CD4-positive, alpha-beta memory T cell (primary cell): ENCODE measurements at regions of chr21 and their contacts with region 1.

Region 1: DNA sequence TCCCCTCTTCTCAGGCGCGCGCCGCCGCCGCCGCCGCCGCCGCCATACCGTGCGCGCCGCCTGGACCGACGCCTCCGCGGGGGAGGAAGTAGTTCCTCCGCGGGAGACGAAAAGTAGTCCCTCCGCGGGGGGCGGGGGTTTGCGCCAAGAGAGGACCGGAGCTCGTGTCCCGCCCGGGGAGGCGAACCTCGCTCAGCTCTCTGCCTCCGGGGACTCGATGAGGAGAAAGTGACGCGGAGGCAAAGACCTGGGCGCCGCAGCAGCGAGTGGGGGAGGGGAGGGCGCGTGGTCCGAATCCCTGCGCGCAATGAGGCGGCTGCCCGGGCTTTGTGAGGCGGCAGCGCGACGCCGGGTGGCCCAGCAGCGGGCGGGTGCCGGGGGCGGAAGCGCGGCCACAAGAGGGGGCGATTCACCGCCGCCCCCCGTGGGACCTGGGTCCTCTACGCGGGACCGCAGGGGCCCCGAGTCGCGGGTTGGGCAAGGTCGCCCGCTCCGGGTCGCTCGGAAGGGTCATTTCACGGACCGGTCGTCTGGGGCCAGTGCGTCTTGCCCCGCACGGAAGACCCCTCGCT is at the start of gene BRWD1:
- DNase-seq: peak; percentile 80 to 87 (median 86)
- H3K4me3 ChIP-seq: peak within 1 kb of the TSS; percentile 33 to 85
- H3K4me3 Mint-ChIP-seq: peak within 1 kb of the TSS; percentile 85 to 95 (median 92)
- H3K27ac ChIP-seq: peak within 1 kb of the TSS; percentile 74
- H3K27ac Mint-ChIP-seq: peak within 1 kb of the TSS; percentile 92 to 99 (median 95)
- H3K4me1 ChIP-seq: peaks cover 35% of the 10 kb centered on the region
- H3K4me1 Mint-ChIP-seq: peaks cover 33 to 53% (median 40%) of the 10 kb centered on the region in 4 donors
- H3K27me3 ChIP-seq: no peaks in the 10 kb centered on the region
- H3K27me3 Mint-ChIP-seq: peaks cover 0 to 2% of the 10 kb centered on the region in 2 donors
- total RNA-seq, gene BRWD1: 92.9 to 99.0 TPM

Region 2: GRCh38 chr21:38824124-38824822 is 489.4 kb before region 1 on chr21:
- CTCF ChIA-PET with region 1: no interaction called
- POLR2A ChIA-PET with region 1: no interaction called
- intact Hi-C with region 1: no loop called
- DNase-seq: no peak
- H3K4me3 ChIP-seq: no peak overlapping the region
- H3K4me3 Mint-ChIP-seq: no peak overlapping the region
- H3K27ac ChIP-seq: no peak overlapping the region
- H3K27ac Mint-ChIP-seq: no peak overlapping the region
- H3K4me1 ChIP-seq: no peaks in the 10 kb centered on the region
- H3K4me1 Mint-ChIP-seq: no peaks in the 10 kb centered on the region
- H3K27me3 ChIP-seq: no peaks in the 10 kb centered on the region
- H3K27me3 Mint-ChIP-seq: no peaks in the 10 kb centered on the region

Region 3: GRCh38 chr21:39300587-39300986 is 13.1 kb before region 1 on chr21:
- CTCF ChIA-PET with region 1: interaction called, 3 read pairs
- POLR2A ChIA-PET with region 1: interaction called, 21 read pairs
- intact Hi-C with region 1: no loop called
- DNase-seq: no peak
- H3K4me3 ChIP-seq: no peak overlapping the region
- H3K4me3 Mint-ChIP-seq: peak overlapping the region in 2 of 8 donors; percentile 28 to 39
- H3K27ac ChIP-seq: no peak overlapping the region
- H3K27ac Mint-ChIP-seq: no peak overlapping the region
- H3K4me1 ChIP-seq: peaks cover 13% of the 10 kb centered on the region
- H3K4me1 Mint-ChIP-seq: peaks cover 25 to 50% (median 34%) of the 10 kb centered on the region in 4 donors
- H3K27me3 ChIP-seq: no peaks in the 10 kb centered on the region
- H3K27me3 Mint-ChIP-seq: no peaks in the 10 kb centered on the region

Region 4: DNA sequence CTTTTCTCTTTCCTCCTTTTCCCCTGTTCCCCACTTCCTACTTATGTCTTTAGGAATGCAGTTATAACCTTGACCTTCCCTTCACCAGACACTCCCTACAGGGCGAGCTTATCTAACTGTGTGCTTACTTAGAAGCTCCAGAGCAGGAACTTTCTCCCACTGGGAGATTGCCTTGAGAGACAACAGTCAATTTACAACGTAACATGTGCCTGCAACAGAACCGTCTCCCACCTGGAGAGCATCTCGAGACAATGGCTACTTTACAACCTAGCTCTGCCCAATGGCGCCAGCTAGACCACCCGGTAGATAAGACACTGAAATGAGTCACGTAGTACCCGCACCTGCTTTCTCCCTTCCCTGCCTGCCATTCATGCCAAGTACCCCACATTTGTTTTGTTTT is 18.5 kb after region 1 on chr21:
- CTCF ChIA-PET with region 1: no interaction called
- POLR2A ChIA-PET with region 1: no interaction called
- intact Hi-C with region 1: no loop called
- DNase-seq: no peak
- H3K4me3 ChIP-seq: no peak overlapping the region
- H3K4me3 Mint-ChIP-seq: no peak overlapping the region
- H3K27ac ChIP-seq: no peak overlapping the region
- H3K27ac Mint-ChIP-seq: peak overlapping the region in 1 of 7 donors; percentile 14
- H3K4me1 ChIP-seq: no peaks in the 10 kb centered on the region
- H3K4me1 Mint-ChIP-seq: no peaks in the 10 kb centered on the region
- H3K27me3 ChIP-seq: peaks cover 6% of the 10 kb centered on the region
- H3K27me3 Mint-ChIP-seq: peaks cover 0 to 1% of the 10 kb centered on the region in 2 donors

Region 5: DNA sequence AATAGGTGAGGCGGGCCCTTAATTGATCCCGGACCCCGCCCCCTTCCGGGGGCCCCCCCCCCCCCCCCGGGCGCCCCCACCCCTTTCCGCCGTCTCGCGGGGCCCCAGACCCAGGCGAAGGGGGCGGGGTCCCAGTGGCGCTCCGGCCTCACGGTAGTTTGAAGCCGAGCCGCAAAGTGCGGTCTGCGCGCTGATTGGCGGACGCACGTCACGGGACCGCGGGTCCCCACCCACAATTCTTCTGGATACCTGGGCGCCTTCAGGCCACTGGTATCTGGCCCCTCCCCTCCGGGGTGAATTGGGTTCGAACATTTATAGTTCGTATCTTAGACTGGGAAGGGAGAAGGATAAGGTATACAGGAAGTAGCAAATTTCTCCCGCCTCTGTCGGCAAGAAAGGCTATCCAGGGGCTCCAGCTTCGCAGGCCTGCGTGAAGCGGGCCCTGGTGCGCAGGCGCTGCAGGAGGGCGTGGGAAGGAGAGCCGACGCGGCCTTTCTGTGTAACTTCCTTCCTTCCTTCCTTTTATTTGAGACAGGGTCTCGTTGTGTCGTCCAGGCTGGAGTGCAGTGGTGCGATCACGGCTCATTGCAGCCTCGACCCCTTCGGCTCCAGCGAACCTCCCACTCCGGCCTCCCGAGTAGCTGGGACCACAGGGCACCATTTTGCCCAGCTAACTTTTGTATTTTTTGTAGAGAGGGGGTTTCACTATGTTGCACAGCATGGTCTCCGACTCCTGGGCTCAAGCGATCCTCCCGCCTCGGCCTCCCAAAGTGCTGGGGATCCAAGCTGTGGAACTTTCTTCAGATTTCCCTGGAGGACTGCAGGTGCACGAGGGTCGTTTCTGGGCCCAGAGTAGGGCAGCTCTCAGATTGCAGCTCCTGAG is 35.8 kb after region 1 on chr21:
- CTCF ChIA-PET with region 1: interaction called, 10 read pairs
- POLR2A ChIA-PET with region 1: interaction called, 197 read pairs
- intact Hi-C with region 1: loop called (anchors 1 kb)
- DNase-seq: peak; percentile 96 to 97 (median 96)
- H3K4me3 ChIP-seq: peak overlapping the region; percentile 58 to 99
- H3K4me3 Mint-ChIP-seq: peak overlapping the region; percentile 92 to 98 (median 96)
- H3K27ac ChIP-seq: peak overlapping the region; percentile 84
- H3K27ac Mint-ChIP-seq: peak overlapping the region; percentile 98 to 99 (median 98)
- H3K4me1 ChIP-seq: peaks cover 45% of the 10 kb centered on the region
- H3K4me1 Mint-ChIP-seq: peaks cover 26 to 52% (median 33%) of the 10 kb centered on the region in 4 donors
- H3K27me3 ChIP-seq: no peaks in the 10 kb centered on the region
- H3K27me3 Mint-ChIP-seq: peaks cover 2% of the 10 kb centered on the region in 2 donors

Region 6: GRCh38 chr21:39379986-39380891 is 66.6 kb after region 1 on chr21:
- CTCF ChIA-PET with region 1: no interaction called
- POLR2A ChIA-PET with region 1: interaction called, 27 read pairs
- intact Hi-C with region 1: loop called (anchors 1 kb)
- DNase-seq: peak; percentile 85 to 92 (median 88)
- H3K4me3 ChIP-seq: peak overlapping the region; percentile 70 to 99
- H3K4me3 Mint-ChIP-seq: peak overlapping the region; percentile 91 to 97 (median 94)
- H3K27ac ChIP-seq: peak overlapping the region; percentile 81
- H3K27ac Mint-ChIP-seq: peak overlapping the region; percentile 91 to 97 (median 93)
- H3K4me1 ChIP-seq: peaks cover 23% of the 10 kb centered on the region
- H3K4me1 Mint-ChIP-seq: peaks cover 13 to 34% (median 26%) of the 10 kb centered on the region in 4 donors
- H3K27me3 ChIP-seq: no peaks in the 10 kb centered on the region
- H3K27me3 Mint-ChIP-seq: peaks cover under 1 to 3% of the 10 kb centered on the region in 2 donors